Ovary (tissue), 10 donors: ENCODE measurements at regions of chr11 and their contacts with region 1.

Region 1: GRCh38 chr11:44611687-44612434 is 46.4 kb downstream of the CD82 start:
- DNase-seq: no peak
- H3K4me3 ChIP-seq: no peak overlapping the region
- H3K27ac ChIP-seq: no peak overlapping the region
- H3K4me1 ChIP-seq: peaks cover 13% of the 10 kb centered on the region
- H3K27me3 ChIP-seq: no peaks in the 10 kb centered on the region
- CTCF ChIP-seq: no peak
- EP300 ChIP-seq: no peak
- POLR2A ChIP-seq: no peak

Region 2: GRCh38 chr11:44104481-44105294 is 507.2 kb before region 1 on chr11:
- intact Hi-C with region 1: loop called in 1 of 4 experiments (anchors 10 kb)
- DNase-seq: no peak
- H3K4me3 ChIP-seq: no peak overlapping the region
- H3K27ac ChIP-seq: no peak overlapping the region
- H3K4me1 ChIP-seq: peaks cover 1% of the 10 kb centered on the region
- H3K27me3 ChIP-seq: no peaks in the 10 kb centered on the region
- CTCF ChIP-seq: no peak
- EP300 ChIP-seq: no peak
- POLR2A ChIP-seq: no peak

Region 3: GRCh38 chr11:44565211-44565952 is 46.5 kb before region 1 on chr11 and contains the start of gene CD82:
- intact Hi-C with region 1: loop called in 2 of 4 experiments (anchors 2 to 5 kb)
- DNase-seq: peak; percentile 100
- H3K4me3 ChIP-seq: peak within 1 kb of the TSS; percentile 69
- H3K27ac ChIP-seq: peak within 1 kb of the TSS; percentile 84 to 92
- H3K4me1 ChIP-seq: peaks cover 25% of the 10 kb centered on the region
- H3K27me3 ChIP-seq: no peaks in the 10 kb centered on the region
- CTCF ChIP-seq: peak in 2 of 3 donors; percentile 23 to 29
- EP300 ChIP-seq: no peak
- POLR2A ChIP-seq: peak; percentile 46
- total RNA-seq, gene CD82: 6.9 to 74.9 (median 39.1) TPM